ENCODE measurements at regions of chr13 and their contacts with region 1.

Region 1: GRCh38 chr13:112643759-112644459 is 45.9 kb upstream of the ATP11A start:
- DNase-seq: no peak
- H3K4me3 ChIP-seq: no peak overlapping the region
- H3K27ac ChIP-seq: no peak overlapping the region
- H3K4me1 ChIP-seq: no peaks in the 10 kb centered on the region
- H3K27me3 ChIP-seq: peaks cover 4% of the 10 kb centered on the region
- CTCF ChIP-seq: no peak

Region 2: GRCh38 chr13:112873851-112874750 is 230.2 kb after region 1 on chr13:
- intact Hi-C with region 1: loop called (anchors 10 kb)
- DNase-seq: peak; percentile 70
- H3K4me3 ChIP-seq: no peak overlapping the region
- H3K27ac ChIP-seq: no peak overlapping the region
- H3K4me1 ChIP-seq: no peaks in the 10 kb centered on the region
- H3K27me3 ChIP-seq: no peaks in the 10 kb centered on the region
- CTCF ChIP-seq: peak; percentile 79

Region 3: DNA sequence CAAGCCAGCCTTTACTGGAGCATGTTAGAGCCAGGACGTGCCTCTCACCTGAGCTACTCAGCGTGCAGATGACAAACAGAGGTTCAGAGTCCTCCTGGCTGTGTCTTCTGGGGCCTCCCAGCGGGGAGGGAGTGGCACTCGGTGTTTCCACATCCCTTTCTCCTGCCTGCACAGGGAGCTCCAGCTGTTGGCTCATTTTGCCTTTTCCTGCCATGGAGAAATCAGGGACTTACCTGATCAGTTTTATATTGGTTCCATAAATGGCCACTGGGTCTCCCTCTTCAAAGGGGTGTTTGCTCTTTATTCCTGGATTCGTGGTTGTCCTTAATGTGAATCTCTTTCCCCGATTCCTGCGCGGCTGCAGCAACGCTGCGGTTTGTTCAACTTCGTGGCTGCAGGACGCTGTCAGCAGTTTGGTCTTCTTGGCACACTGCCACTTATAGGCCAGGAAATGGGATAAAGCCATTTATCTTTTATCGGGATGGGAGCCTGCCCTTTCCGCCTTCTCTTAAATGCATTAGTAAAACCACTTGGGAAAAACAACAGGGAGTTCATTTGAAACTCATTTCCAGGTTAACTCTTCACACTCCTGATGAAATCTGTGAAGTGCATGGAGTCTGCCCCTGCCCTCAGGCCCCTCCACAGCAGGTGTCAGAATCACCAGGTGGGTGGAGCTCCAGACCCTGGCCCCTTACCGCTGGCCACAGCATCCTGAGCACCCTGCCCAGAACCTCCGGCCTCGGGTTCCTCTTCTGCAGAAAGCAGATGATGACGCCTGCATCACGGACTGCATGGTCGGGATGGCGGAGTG is 285.3 kb after region 1 on chr13:
- intact Hi-C with region 1: loop called (anchors 10 kb)
- DNase-seq: peak; percentile 70
- H3K4me3 ChIP-seq: no peak overlapping the region
- H3K27ac ChIP-seq: no peak overlapping the region
- H3K4me1 ChIP-seq: peaks cover 13% of the 10 kb centered on the region
- H3K27me3 ChIP-seq: no peaks in the 10 kb centered on the region
- CTCF ChIP-seq: no peak

Measured in colonic mucosa (tissue), 4 donors.